Left colon (tissue), 2 donors: ENCODE measurements at regions of chr4 and their contacts with region 1.

Region 1: DNA sequence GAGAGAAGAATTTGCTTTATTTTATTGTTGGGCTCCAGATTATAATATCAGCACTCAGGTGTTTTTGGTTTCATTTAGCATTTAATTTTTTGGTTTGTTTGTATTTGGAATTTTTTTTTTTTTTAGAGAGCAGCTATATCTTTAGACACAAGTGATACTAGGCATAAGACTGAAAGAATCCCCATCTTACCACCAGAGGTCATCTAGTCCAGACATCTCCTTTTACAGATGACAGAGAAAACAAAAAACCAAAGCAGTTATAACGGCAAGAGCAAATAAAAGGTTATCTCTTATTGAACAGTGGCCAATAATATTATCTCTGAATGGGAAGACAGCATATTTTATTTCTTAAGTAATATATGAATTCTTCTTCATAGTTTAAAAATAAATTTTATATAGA is 22.8 kb downstream of the USP38 start:
- DNase-seq: no peak
- ATAC-seq: peak; percentile 70

Region 2: GRCh38 chr4:143286701-143287571 is 79.4 kb after region 1 on chr4:
- intact Hi-C with region 1: no loop called
- DNase-seq: no peak
- ATAC-seq: no peak

Region 3: GRCh38 chr4:143335979-143336780 is 128.6 kb after region 1 on chr4:
- intact Hi-C with region 1: loop called in 1 of 2 experiments (anchors 10 kb)
- DNase-seq: peak; percentile 90 to 91
- ATAC-seq: peak; percentile 82

Region 4: GRCh38 chr4:143482840-143483239 is 275.3 kb after region 1 on chr4:
- intact Hi-C with region 1: loop called in 1 of 2 experiments (anchors 5 kb)
- DNase-seq: no peak
- ATAC-seq: peak; percentile 68

Region 5: DNA sequence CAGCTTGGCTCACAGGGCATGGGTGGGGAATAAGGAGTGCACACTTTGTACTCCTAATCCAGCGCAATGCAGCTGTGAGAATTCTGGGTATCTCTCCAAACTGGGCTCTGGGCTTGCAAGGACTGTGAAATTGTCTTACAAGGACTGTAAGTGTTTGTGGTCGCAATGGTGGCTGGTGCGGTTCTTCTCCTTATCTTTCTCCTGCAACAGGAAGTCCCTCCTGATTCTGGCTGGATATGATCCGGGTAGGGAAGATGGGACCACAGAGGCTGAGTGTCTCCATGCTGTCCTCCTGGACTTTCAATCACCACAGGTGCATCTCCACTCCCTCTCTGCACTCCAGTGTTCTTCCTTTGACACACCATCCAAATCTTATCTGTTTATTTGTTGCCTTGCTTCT is 753.5 kb after region 1 on chr4:
- intact Hi-C with region 1: no loop called
- DNase-seq: no peak
- ATAC-seq: no peak